ENCODE measurements at regions of chr14 and their contacts with region 1.

Region 1: DNA sequence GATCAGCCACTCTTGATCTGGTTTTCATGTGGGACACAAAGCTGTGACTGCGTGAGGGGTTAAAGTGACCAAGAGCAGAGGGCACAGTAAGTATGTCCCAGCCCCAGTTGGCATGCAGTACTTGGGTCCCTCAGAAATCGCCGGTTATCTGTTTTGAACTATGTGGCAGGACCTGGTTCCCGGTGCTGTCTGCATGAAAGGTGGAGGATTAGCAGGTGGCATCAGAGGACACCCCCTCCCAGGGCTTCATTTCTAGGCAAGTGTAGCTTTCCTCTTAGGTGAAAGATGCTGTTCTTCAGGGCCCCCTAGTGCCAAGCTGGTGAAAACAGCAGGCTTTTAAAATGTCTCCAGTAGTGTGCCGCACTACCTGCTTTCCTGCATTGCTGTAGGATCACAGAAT is 57.1 kb downstream of the ATG14 start:
- DNase-seq: peak; percentile 64
- ATAC-seq: peak; percentile 82
- H3K4me3 ChIP-seq: no peak overlapping the region
- H3K4me3 Mint-ChIP-seq: no peak overlapping the region
- H3K27ac ChIP-seq: no peak overlapping the region
- H3K27ac Mint-ChIP-seq: no peak overlapping the region
- H3K4me1 ChIP-seq: peaks cover 0 to 3% of the 10 kb centered on the region in 2 donors
- H3K4me1 Mint-ChIP-seq: peaks cover 9% of the 10 kb centered on the region
- H3K27me3 ChIP-seq: no peaks in the 10 kb centered on the region
- H3K27me3 Mint-ChIP-seq: no peaks in the 10 kb centered on the region
- CTCF ChIP-seq: peak; percentile 71

Region 2: DNA sequence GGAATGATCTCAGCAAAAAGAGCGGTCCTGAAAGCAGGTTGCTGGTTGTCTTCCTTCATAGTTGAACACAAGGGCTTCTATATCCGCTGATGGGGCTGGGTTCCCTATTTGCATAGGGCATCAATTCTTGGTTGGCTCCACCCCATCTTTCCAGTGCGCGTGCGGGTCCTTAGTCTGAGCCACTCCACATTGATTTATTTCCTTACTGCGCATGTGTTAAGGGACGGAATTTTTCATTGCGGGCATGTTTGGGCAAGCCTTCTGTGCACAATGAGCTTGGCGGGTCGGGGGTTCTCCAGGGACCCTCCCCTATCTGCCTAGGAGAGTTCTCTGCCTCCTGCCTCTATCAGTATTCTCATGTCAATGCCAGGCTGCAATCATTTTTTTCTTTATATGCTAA is 141.9 kb before region 1 on chr14:
- CTCF ChIA-PET with region 1: interaction called, 32 read pairs
- POLR2A ChIA-PET with region 1: no interaction called
- intact Hi-C with region 1: loop called (anchors 1 kb)
- DNase-seq: no peak
- ATAC-seq: no peak
- H3K4me3 ChIP-seq: no peak overlapping the region
- H3K4me3 Mint-ChIP-seq: no peak overlapping the region
- H3K27ac ChIP-seq: no peak overlapping the region
- H3K27ac Mint-ChIP-seq: no peak overlapping the region
- H3K4me1 ChIP-seq: no peaks in the 10 kb centered on the region
- H3K4me1 Mint-ChIP-seq: peaks cover 2% of the 10 kb centered on the region
- H3K27me3 ChIP-seq: no peaks in the 10 kb centered on the region
- H3K27me3 Mint-ChIP-seq: no peaks in the 10 kb centered on the region
- CTCF ChIP-seq: no peak

Region 3: GRCh38 chr14:55245657-55246268 is 108.7 kb before region 1 on chr14:
- CTCF ChIA-PET with region 1: interaction called, 32 read pairs
- POLR2A ChIA-PET with region 1: no interaction called
- intact Hi-C with region 1: loop called (anchors 1 kb)
- DNase-seq: peak; percentile 43
- ATAC-seq: peak; percentile 60
- H3K4me3 ChIP-seq: no peak overlapping the region
- H3K4me3 Mint-ChIP-seq: no peak overlapping the region
- H3K27ac ChIP-seq: no peak overlapping the region
- H3K27ac Mint-ChIP-seq: no peak overlapping the region
- H3K4me1 ChIP-seq: no peaks in the 10 kb centered on the region
- H3K4me1 Mint-ChIP-seq: no peaks in the 10 kb centered on the region
- H3K27me3 ChIP-seq: no peaks in the 10 kb centered on the region
- H3K27me3 Mint-ChIP-seq: peaks cover 36% of the 10 kb centered on the region
- CTCF ChIP-seq: peak; percentile 70

Region 4: GRCh38 chr14:55532645-55533344 is 178.3 kb after region 1 on chr14:
- CTCF ChIA-PET with region 1: no interaction called
- POLR2A ChIA-PET with region 1: no interaction called
- intact Hi-C with region 1: no loop called
- DNase-seq: no peak
- ATAC-seq: no peak
- H3K4me3 ChIP-seq: no peak overlapping the region
- H3K4me3 Mint-ChIP-seq: no peak overlapping the region
- H3K27ac ChIP-seq: no peak overlapping the region
- H3K27ac Mint-ChIP-seq: no peak overlapping the region
- H3K4me1 ChIP-seq: no peaks in the 10 kb centered on the region
- H3K4me1 Mint-ChIP-seq: no peaks in the 10 kb centered on the region
- H3K27me3 ChIP-seq: no peaks in the 10 kb centered on the region
- H3K27me3 Mint-ChIP-seq: peaks cover 12% of the 10 kb centered on the region
- CTCF ChIP-seq: no peak